Aorta (tissue), 5 donors: ENCODE measurements at regions of chr5 and their contacts with region 1.

Region 1: DNA sequence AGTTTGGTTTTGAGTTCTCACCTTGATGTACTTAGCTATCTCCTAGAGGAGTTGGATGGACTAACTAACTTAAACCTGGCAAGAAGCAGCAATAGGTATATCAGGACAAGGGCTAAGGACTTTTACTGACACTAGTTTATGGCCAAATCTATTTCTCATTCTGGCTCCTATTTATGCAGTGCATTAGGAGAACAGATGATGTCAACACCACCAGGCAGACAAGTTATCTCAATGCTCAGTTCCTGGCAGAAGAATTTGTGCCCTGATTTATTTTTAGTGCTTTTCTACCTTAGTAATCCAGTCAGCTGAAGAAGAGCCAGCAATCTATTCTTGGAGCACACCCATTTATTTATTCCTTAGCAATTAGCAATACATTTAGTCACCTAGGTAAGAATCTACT is 30.7 kb upstream of the MYOT start:
- DNase-seq: no peak
- ATAC-seq: peak; percentile 52
- H3K4me3 ChIP-seq: no peak overlapping the region
- H3K27ac ChIP-seq: peak overlapping the region in 1 of 2 donors; percentile 87
- H3K4me1 ChIP-seq: peaks cover 2 to 3% of the 10 kb centered on the region in 2 donors
- H3K27me3 ChIP-seq: no peaks in the 10 kb centered on the region

Region 2: GRCh38 chr5:137688210-137688840 is 148.7 kb before region 1 on chr5:
- intact Hi-C with region 1: no loop called
- DNase-seq: no peak
- ATAC-seq: no peak
- H3K4me3 ChIP-seq: no peak overlapping the region
- H3K27ac ChIP-seq: no peak overlapping the region
- H3K4me1 ChIP-seq: no peaks in the 10 kb centered on the region
- H3K27me3 ChIP-seq: no peaks in the 10 kb centered on the region

Region 3: DNA sequence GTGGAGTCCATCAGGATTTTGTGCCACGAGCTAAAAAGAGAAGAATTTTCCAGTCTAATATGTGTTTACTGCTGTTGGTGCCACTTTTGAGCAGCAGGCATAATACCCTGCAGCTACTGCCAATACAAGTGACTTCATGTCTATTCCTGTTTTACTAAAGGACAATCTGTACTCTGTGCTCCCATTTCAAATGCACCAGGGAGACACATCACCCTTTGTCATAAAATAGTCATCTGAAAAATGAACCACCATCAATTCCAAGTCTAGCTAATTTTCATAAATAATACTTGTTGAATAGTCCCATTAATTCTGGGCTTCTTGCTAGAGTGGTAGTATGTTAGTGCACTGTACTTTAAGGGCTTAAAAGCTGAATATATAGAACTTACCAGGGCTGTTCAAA is 43.3 kb after region 1 on chr5:
- intact Hi-C with region 1: loop called (anchors 5 kb)
- DNase-seq: no peak
- ATAC-seq: no peak
- H3K4me3 ChIP-seq: no peak overlapping the region
- H3K27ac ChIP-seq: peak overlapping the region in 1 of 2 donors; percentile 67
- H3K4me1 ChIP-seq: peaks cover 0 to 1% of the 10 kb centered on the region in 2 donors
- H3K27me3 ChIP-seq: no peaks in the 10 kb centered on the region

Region 4: GRCh38 chr5:137888857-137889759 is 52.1 kb after region 1 on chr5 and contains the start of gene PKD2L2:
- intact Hi-C with region 1: loop called (anchors 5 kb)
- DNase-seq: peak; percentile 92
- ATAC-seq: peak; percentile 96
- H3K4me3 ChIP-seq: peak within 1 kb of the TSS in 1 of 2 donors; percentile 33
- H3K27ac ChIP-seq: peak within 1 kb of the TSS; percentile 69 to 91
- H3K4me1 ChIP-seq: peaks cover 0 to 2% of the 10 kb centered on the region in 2 donors
- H3K27me3 ChIP-seq: no peaks in the 10 kb centered on the region
- total RNA-seq, gene PKD2L2: not detected

Region 5: GRCh38 chr5:137997726-137998213 is 160.8 kb after region 1 on chr5:
- intact Hi-C with region 1: loop called in 1 of 2 experiments (anchors 5 kb)
- DNase-seq: no peak
- ATAC-seq: no peak
- H3K4me3 ChIP-seq: no peak overlapping the region
- H3K27ac ChIP-seq: no peak overlapping the region
- H3K4me1 ChIP-seq: peaks cover 0 to 1% of the 10 kb centered on the region in 2 donors
- H3K27me3 ChIP-seq: no peaks in the 10 kb centered on the region